PC-3 (cell line): ENCODE measurements at regions of chr1 and their contacts with region 1.

Region 1: GRCh38 chr1:119475866-119476439 is 31.1 kb upstream of the HSD3B1 start:
- DNase-seq: peak; percentile 85
- ATAC-seq: peak; percentile 87
- H3K4me3 ChIP-seq: no peak overlapping the region
- H3K27ac ChIP-seq: no peak overlapping the region
- H3K4me1 ChIP-seq: no peaks in the 10 kb centered on the region; the same call in 1 of the 2 replicates
- H3K27me3 ChIP-seq: peaks cover 16% of the 10 kb centered on the region
- CTCF ChIP-seq: peak; percentile 85

Region 2: GRCh38 chr1:119372490-119373086 is 103.4 kb before region 1 on chr1:
- CTCF ChIA-PET with region 1: interaction called, 3 read pairs
- POLR2A ChIA-PET with region 1: no interaction called
- intact Hi-C with region 1: loop called (anchors 5 kb)
- DNase-seq: peak; percentile 80
- ATAC-seq: peak; percentile 67
- H3K4me3 ChIP-seq: no peak overlapping the region
- H3K27ac ChIP-seq: no peak overlapping the region
- H3K4me1 ChIP-seq: peaks cover 25% of the 10 kb centered on the region
- H3K27me3 ChIP-seq: peaks cover 15% of the 10 kb centered on the region
- CTCF ChIP-seq: peak; percentile 64

Region 3: GRCh38 chr1:119582801-119583200 is 106.8 kb after region 1 on chr1:
- CTCF ChIA-PET with region 1: interaction called, 3 read pairs
- POLR2A ChIA-PET with region 1: no interaction called
- intact Hi-C with region 1: loop called (anchors 10 kb)
- DNase-seq: peak; percentile 82
- ATAC-seq: peak; percentile 97
- H3K4me3 ChIP-seq: no peak overlapping the region
- H3K27ac ChIP-seq: no peak overlapping the region
- H3K4me1 ChIP-seq: no peaks in the 10 kb centered on the region
- H3K27me3 ChIP-seq: no peaks in the 10 kb centered on the region
- CTCF ChIP-seq: peak; percentile 77

Region 4: DNA sequence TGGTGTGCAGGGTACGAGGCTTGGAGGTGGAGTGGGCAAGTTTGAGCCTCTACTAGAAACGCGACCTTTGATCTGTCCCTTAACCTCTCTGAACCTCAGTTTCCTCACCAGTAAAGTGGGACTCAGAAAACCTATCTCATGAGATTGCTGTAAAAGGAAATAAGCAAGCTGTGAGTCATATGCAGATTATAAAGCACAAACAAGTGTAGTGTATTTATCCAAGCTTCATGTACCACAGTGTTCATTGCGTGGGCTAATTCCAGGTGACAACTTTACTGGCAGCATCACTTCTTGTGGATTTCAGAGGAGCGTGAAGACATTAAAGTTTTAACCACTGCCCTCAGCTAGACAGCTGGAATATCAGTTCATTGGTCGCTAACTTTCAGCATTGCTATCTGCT is 127.7 kb after region 1 on chr1:
- CTCF ChIA-PET with region 1: no interaction called
- POLR2A ChIA-PET with region 1: no interaction called
- intact Hi-C with region 1: no loop called
- DNase-seq: no peak
- ATAC-seq: peak; percentile 59
- H3K4me3 ChIP-seq: no peak overlapping the region
- H3K27ac ChIP-seq: no peak overlapping the region
- H3K4me1 ChIP-seq: peaks cover 14% of the 10 kb centered on the region
- H3K27me3 ChIP-seq: no peaks in the 10 kb centered on the region
- CTCF ChIP-seq: no peak

Region 5: GRCh38 chr1:119662034-119662437 is 186.1 kb after region 1 on chr1:
- CTCF ChIA-PET with region 1: no interaction called
- POLR2A ChIA-PET with region 1: no interaction called
- intact Hi-C with region 1: no loop called
- DNase-seq: peak; percentile 25
- ATAC-seq: peak; percentile 55
- H3K4me3 ChIP-seq: no peak overlapping the region
- H3K27ac ChIP-seq: peak overlapping the region; percentile 6; the same call in 1 of the 2 replicates
- H3K4me1 ChIP-seq: peaks cover 28% of the 10 kb centered on the region
- H3K27me3 ChIP-seq: no peaks in the 10 kb centered on the region
- CTCF ChIP-seq: no peak